Naive thymus-derived CD4-positive, alpha-beta T cell (primary cell): ENCODE measurements at regions of chr2 and their contacts with region 1.

Region 1: GRCh38 chr2:101308432-101309210 is at the start of gene RNF149:
- DNase-seq: peak; percentile 80 to 98 (median 86)
- ATAC-seq: peak; percentile 84
- H3K4me3 ChIP-seq: peak within 1 kb of the TSS; percentile 84
- H3K4me3 Mint-ChIP-seq: peak within 1 kb of the TSS; percentile 91 to 100 (median 98)
- H3K27ac ChIP-seq: peak within 1 kb of the TSS; percentile 88
- H3K27ac Mint-ChIP-seq: peak within 1 kb of the TSS; percentile 91 to 99 (median 98)
- H3K4me1 ChIP-seq: peaks cover 60 to 63% of the 10 kb centered on the region in 2 donors
- H3K4me1 Mint-ChIP-seq: peaks cover 56 to 83% (median 74%) of the 10 kb centered on the region in 7 donors
- H3K27me3 ChIP-seq: no peaks in the 10 kb centered on the region
- H3K27me3 Mint-ChIP-seq: peaks cover 0 to 4% (median 0%) of the 10 kb centered on the region in 5 donors
- total RNA-seq, gene RNF149: 88.9 to 159 (median 114) TPM

Region 2: DNA sequence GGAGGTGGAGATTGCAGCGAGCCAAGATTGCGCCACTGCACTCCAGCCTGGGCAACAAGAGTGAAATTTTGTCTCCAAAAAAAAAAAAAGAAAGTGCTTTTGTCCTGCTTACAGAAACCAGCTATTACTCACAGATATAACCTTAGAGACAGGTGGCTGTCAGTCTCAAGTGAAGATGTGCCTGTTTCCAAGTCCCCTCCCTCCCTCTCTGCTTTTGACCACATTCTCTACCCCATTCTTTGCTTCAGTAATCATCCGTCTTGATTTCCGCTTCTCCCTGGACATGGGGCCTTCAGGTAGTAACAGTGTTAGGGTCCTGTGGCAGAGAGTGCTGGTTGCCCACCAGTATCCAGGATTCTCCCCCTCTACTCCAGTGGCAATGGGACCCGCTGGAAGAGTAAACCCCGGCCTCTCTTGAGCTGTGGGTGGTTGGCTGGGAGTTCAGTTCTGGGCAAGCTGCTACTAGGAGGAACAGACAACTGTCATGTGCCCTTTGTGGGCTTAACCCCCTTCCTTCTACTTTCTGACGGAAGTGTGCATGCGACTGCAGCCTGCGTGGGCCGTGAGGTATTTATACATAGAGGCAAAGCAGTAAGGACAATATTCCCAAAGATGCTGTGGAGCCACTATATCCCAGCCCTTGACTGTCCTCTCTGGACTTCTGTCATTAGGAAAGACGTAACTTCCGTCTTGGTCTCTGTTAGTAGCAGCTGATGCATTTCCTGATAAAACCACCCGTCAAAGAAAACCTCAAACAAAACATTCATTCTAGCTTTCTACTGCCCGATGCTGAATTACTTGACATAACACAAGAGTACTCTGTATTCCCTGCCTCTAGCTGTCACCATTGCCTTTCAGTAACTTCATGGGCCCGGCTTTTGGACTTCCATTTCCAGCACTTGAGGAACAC is 728.0 kb before region 1 on chr2:
- CTCF ChIA-PET with region 1: no interaction called
- POLR2A ChIA-PET with region 1: no interaction called
- intact Hi-C with region 1: loop called in 1 of 2 experiments (anchors 5 kb)
- DNase-seq: peak; percentile 43 to 83 (median 80)
- ATAC-seq: peak; percentile 89
- H3K4me3 ChIP-seq: peak overlapping the region; percentile 45
- H3K4me3 Mint-ChIP-seq: peak overlapping the region; percentile 33 to 81 (median 62)
- H3K27ac ChIP-seq: peak overlapping the region; percentile 91
- H3K27ac Mint-ChIP-seq: peak overlapping the region; percentile 86 to 99 (median 94)
- H3K4me1 ChIP-seq: peaks cover 31 to 37% of the 10 kb centered on the region in 2 donors
- H3K4me1 Mint-ChIP-seq: peaks cover 24 to 50% (median 42%) of the 10 kb centered on the region in 7 donors
- H3K27me3 ChIP-seq: no peaks in the 10 kb centered on the region
- H3K27me3 Mint-ChIP-seq: no peaks in the 10 kb centered on the region

Region 3: DNA sequence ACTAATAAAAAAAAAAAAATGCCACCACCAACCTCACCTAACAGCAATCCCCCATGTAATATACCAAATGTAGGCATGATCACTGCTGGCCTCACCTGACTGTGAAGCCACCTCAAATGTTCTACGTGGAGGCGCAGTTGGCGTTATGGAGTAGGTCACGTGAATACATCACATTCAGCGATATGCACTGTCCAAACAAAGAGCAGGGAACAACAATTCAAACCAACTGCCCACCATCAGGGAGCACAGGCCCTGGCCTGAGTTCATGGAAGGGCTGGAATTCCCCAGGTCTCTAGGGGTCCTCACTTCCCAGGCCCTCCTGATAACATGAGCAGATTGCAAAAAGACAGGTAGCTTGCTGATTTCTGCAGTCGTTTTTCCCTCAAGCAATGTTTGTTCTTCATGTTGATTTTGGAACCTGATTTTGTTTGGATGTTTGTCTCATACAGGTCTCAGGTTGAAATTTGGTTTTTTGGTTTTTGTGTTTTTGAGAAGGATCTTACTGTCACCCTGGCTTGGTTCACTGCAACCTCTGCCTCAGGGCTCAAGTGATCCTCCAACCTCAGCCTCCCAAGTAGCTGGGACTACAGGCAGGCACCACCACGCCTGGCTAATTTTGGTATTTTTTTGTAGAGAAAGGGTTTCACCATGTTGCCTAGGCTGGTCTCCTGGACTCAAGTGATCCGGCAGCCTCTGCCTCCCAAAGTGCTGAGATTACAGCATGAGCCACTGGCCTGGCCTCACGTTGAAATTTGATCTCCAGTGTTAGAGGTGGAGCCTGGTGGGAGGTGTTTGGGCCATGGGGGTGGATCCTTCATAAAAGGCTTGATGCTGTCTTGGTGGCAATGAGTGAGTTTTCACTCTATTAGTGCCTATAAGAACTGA is 173.0 kb before region 1 on chr2:
- CTCF ChIA-PET with region 1: no interaction called
- POLR2A ChIA-PET with region 1: no interaction called
- intact Hi-C with region 1: no loop called
- DNase-seq: no peak
- ATAC-seq: no peak
- H3K4me3 ChIP-seq: no peak overlapping the region
- H3K4me3 Mint-ChIP-seq: no peak overlapping the region
- H3K27ac ChIP-seq: no peak overlapping the region
- H3K27ac Mint-ChIP-seq: no peak overlapping the region
- H3K4me1 ChIP-seq: no peaks in the 10 kb centered on the region
- H3K4me1 Mint-ChIP-seq: peaks cover 0 to 7% (median 0%) of the 10 kb centered on the region in 7 donors
- H3K27me3 ChIP-seq: no peaks in the 10 kb centered on the region
- H3K27me3 Mint-ChIP-seq: peaks cover 0 to 14% (median 5%) of the 10 kb centered on the region in 5 donors

Region 4: DNA sequence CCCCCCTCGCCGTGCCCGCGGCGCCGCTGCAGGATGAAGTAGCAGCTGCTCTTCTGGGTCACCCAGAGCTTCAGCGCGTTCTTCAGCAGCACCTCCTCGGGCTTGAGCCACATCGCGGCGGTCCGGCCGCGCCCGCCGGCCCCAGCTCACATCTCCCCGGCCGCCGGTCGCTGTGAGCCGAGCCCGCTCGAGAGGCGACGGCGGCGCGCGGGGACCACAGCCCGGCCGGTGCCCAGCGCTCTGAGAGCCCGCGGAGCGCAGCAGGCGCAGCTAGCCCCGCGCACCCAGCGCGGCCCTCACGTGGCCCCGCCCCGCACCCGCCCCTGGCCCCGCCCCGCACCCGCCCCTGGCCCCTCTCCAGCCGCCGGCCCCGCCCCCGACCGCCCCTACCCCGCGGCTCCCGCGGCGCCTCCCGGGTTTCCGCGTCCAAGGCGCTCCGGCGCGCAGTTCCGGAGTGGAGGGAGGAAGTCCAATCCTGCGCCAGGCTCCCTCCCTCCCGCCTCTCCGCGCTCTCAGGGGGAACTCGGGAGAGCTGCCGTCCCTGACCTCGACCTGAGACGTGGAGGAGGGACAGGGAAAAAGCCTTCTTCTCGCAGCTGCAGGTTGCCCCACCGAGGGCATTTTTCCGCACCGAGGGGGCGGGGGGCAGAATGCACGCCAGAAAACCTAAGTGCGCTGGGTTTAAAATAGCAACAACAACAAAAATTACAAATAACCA is 157.3 kb before region 1 on chr2 and contains the start of gene TBC1D8:
- CTCF ChIA-PET with region 1: no interaction called
- POLR2A ChIA-PET with region 1: no interaction called
- intact Hi-C with region 1: loop called (anchors 2 to 5 kb)
- DNase-seq: peak; percentile 19 to 79 (median 47)
- ATAC-seq: peak; percentile 89
- H3K4me3 ChIP-seq: peak within 1 kb of the TSS; percentile 45
- H3K4me3 Mint-ChIP-seq: peak within 1 kb of the TSS; percentile 76 to 90 (median 86)
- H3K27ac ChIP-seq: no peak within 1 kb of the TSS
- H3K27ac Mint-ChIP-seq: peak within 1 kb of the TSS in 7 of 9 donors; percentile 14 to 79 (median 65)
- H3K4me1 ChIP-seq: peaks cover 8 to 19% of the 10 kb centered on the region in 2 donors
- H3K4me1 Mint-ChIP-seq: peaks cover 14 to 36% (median 25%) of the 10 kb centered on the region in 7 donors
- H3K27me3 ChIP-seq: peaks cover 0 to 4% of the 10 kb centered on the region in 2 donors
- H3K27me3 Mint-ChIP-seq: peaks cover 0 to 75% (median 16%) of the 10 kb centered on the region in 5 donors
- total RNA-seq, gene TBC1D8: 0.87 to 20.1 (median 2.4) TPM

Region 5: DNA sequence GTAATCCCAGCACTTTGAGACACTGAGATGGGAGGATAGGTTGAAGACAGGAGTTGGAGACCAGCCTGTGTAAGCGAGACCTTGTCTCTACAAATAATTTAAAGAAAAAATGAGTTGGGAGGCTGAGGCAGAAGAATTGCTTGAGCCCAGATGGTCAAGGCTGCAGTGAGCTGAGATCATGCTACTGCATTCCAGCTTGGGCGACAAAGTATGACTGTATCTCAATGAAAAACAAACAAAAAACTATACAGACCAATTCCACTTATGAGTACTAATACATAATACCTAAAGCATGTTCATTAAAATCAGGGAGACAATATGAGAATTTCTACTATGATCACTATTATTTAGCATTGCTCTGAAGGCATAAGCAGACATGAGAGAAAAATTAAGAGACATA is 12.7 kb before region 1 on chr2:
- CTCF ChIA-PET with region 1: no interaction called
- POLR2A ChIA-PET with region 1: interaction called, 16 read pairs
- intact Hi-C with region 1: loop called in 1 of 2 experiments (anchors 1 kb)
- DNase-seq: no peak
- ATAC-seq: no peak
- H3K4me3 ChIP-seq: no peak overlapping the region
- H3K4me3 Mint-ChIP-seq: peak overlapping the region in 6 of 10 donors; percentile 7 to 53 (median 38)
- H3K27ac ChIP-seq: no peak overlapping the region
- H3K27ac Mint-ChIP-seq: peak overlapping the region in 3 of 9 donors; percentile 2 to 37 (median 11)
- H3K4me1 ChIP-seq: peaks cover 30 to 48% of the 10 kb centered on the region in 2 donors
- H3K4me1 Mint-ChIP-seq: peaks cover 42 to 81% (median 67%) of the 10 kb centered on the region in 7 donors
- H3K27me3 ChIP-seq: no peaks in the 10 kb centered on the region
- H3K27me3 Mint-ChIP-seq: no peaks in the 10 kb centered on the region

Region 6: DNA sequence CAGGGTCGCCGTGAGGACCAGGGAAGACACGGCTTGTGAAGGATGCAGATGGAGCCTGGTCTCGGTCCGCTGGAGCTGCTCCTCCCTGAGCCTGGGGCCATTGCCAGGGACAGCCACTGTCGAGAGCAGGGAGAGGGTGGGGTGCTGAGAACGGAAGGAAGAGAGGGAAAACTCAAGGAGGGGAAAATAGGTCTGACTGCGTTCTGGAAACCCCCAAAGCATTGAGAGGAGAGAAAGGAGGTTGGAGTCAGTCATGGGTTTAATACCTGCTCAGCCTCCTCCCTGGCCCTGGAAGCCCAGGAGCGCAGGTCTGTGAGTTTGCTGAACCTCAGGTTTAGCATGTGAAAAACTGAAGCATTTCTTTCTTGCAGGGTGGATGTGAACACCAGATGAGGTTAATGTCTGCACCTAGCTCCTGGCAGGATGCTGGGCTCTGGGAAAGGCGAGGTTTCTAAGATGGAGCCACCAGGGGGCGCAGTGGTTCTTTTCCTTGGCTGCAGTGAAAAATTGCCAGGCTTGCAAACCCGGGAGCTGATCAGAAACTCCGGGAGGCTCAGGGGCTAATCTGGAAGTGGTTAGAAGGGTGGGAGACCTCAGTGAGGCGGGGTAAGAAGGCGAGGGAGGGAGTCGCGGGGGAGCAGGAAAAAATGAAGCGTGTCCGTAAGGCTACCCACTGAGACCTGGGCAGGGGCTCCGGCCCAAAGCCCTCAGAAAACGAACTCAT is 33.4 kb after region 1 on chr2:
- CTCF ChIA-PET with region 1: interaction called, 4 read pairs
- POLR2A ChIA-PET with region 1: interaction called, 7 read pairs
- intact Hi-C with region 1: loop called (anchors 1 kb)
- DNase-seq: peak; percentile 32 to 73 (median 51)
- ATAC-seq: peak; percentile 76
- H3K4me3 ChIP-seq: no peak overlapping the region
- H3K4me3 Mint-ChIP-seq: peak overlapping the region in 4 of 10 donors; percentile 10 to 63 (median 18)
- H3K27ac ChIP-seq: no peak overlapping the region
- H3K27ac Mint-ChIP-seq: peak overlapping the region in 5 of 9 donors; percentile 9 to 68 (median 31)
- H3K4me1 ChIP-seq: peaks cover 6 to 21% of the 10 kb centered on the region in 2 donors
- H3K4me1 Mint-ChIP-seq: peaks cover 24 to 43% (median 32%) of the 10 kb centered on the region in 7 donors
- H3K27me3 ChIP-seq: no peaks in the 10 kb centered on the region
- H3K27me3 Mint-ChIP-seq: peaks cover 0 to 20% (median 0%) of the 10 kb centered on the region in 5 donors

Region 7: GRCh38 chr2:101717071-101717845 is 408.6 kb after region 1 on chr2:
- CTCF ChIA-PET with region 1: no interaction called
- POLR2A ChIA-PET with region 1: no interaction called
- intact Hi-C with region 1: loop called in 1 of 2 experiments (anchors 5 kb)
- DNase-seq: peak in 7 of 9 donors; percentile 58 to 74 (median 65)
- ATAC-seq: peak; percentile 72
- H3K4me3 ChIP-seq: peak overlapping the region; percentile 22
- H3K4me3 Mint-ChIP-seq: peak overlapping the region; percentile 39 to 83 (median 76)
- H3K27ac ChIP-seq: peak overlapping the region; percentile 64
- H3K27ac Mint-ChIP-seq: peak overlapping the region in 8 of 9 donors; percentile 76 to 98 (median 96)
- H3K4me1 ChIP-seq: peaks cover 53 to 74% of the 10 kb centered on the region in 2 donors
- H3K4me1 Mint-ChIP-seq: peaks cover 56 to 92% (median 83%) of the 10 kb centered on the region in 7 donors
- H3K27me3 ChIP-seq: no peaks in the 10 kb centered on the region
- H3K27me3 Mint-ChIP-seq: no peaks in the 10 kb centered on the region